ENCODE measurements at regions of chr9 and their contacts with region 1.

Region 1: GRCh38 chr9:125261501-125262293 is at the start of gene GAPVD1:
- DNase-seq: peak; percentile 89
- ATAC-seq: peak; percentile 97
- H3K4me3 ChIP-seq: peak within 1 kb of the TSS; percentile 93
- H3K27ac ChIP-seq: no peak within 1 kb of the TSS
- H3K4me1 ChIP-seq: peaks cover 15% of the 10 kb centered on the region
- H3K27me3 ChIP-seq: no peaks in the 10 kb centered on the region
- CTCF ChIP-seq: peak; percentile 29; the same call in 1 of the 2 replicates
- total RNA-seq, gene GAPVD1: 29.7 and 30.5 TPM in 2 replicates

Region 2: DNA sequence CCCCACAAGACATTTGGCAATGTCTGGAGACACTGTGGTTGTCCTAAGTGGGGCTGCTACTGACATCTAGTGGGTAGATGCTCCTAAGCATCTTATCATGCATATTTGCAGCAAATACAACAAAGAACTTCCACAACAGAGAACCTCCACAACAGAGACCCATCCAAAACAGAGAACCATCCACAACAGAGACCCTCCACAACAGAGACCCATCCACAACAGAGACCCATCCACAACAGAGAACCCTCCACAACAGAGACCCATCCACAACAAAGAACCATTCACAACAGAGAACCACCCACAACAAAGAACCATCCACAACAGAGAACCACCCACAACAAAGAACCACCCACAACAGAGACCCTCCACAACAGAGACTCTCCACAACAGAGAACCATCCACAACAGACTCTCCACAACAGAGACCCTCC is 366.9 kb before region 1 on chr9:
- CTCF ChIA-PET with region 1: interaction called, 10 read pairs
- POLR2A ChIA-PET with region 1: no interaction called
- intact Hi-C with region 1: no loop called
- DNase-seq: peak; percentile 39
- ATAC-seq: peak; percentile 48
- H3K4me3 ChIP-seq: no peak overlapping the region
- H3K27ac ChIP-seq: no peak overlapping the region
- H3K4me1 ChIP-seq: no peaks in the 10 kb centered on the region
- H3K27me3 ChIP-seq: no peaks in the 10 kb centered on the region
- CTCF ChIP-seq: peak; percentile 58